Lower leg skin (tissue), 4 donors: ENCODE measurements at regions of chr15 and their contacts with region 1.

Region 1: GRCh38 chr15:85993116-85993515 is 86.6 kb upstream of the AGBL1 start:
- DNase-seq: no peak
- H3K4me3 ChIP-seq: no peak overlapping the region
- CTCF ChIP-seq: no peak
- POLR2A ChIP-seq: no peak

Region 2: GRCh38 chr15:86061581-86061980 is 68.5 kb after region 1 on chr15:
- intact Hi-C with region 1: no loop called
- DNase-seq: no peak
- H3K4me3 ChIP-seq: no peak overlapping the region
- CTCF ChIP-seq: no peak
- POLR2A ChIP-seq: no peak

Region 3: DNA sequence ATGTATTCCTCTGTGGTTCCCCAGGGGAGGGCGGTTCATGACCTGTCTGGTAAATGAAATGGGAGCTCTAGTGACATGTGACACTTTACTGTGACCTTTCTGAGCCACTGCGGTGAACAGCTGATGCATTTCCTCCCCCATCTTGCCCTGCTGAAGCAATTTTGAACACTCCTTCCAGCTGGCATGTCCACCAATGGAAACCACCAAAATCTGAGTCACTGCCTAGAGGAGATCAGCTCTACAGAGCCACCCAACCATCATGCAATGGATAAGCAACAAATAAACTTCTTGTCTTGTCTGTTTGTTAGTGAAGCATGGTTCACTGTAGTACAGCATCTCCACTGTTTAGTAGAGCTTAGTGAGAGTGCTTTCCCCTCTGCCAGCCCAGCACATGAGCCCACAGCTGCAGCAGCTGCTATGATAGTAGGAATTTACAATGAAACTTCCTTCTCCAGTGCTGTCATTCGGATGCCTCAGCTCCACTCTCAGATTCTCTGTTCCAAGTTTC is 1784.0 kb after region 1 on chr15:
- intact Hi-C with region 1: loop called (anchors 5 kb)
- DNase-seq: peak in 1 of 2 donors; percentile 30
- H3K4me3 ChIP-seq: no peak overlapping the region
- CTCF ChIP-seq: no peak
- POLR2A ChIP-seq: no peak